ENCODE measurements at regions of chr7 and their contacts with region 1.

Region 1: GRCh38 chr7:141072548-141073172 is 1.2 kb upstream of the TMEM178B start:
- DNase-seq: peak; percentile 65 to 97 (median 84)

Region 2: DNA sequence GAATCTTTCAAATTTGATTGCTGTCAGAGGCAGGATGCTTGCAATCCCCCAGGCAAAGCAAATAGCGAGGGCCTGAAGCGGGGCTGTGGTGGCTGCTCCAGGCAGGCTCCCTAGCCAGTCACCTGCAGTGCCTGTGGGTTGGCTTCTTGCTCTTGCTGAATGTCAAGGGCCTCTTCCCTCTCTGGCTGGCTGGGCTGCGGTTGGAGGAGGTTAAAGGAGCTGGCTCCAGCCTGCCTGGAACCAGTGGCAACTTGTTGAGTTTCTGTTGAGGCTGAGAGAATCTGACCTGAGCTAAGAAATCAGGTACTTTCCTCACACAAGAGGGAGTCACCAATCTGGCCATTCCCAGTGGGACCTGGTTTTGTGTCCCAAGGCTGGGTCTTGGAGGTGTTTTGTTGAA is 135.9 kb after region 1 on chr7:
- intact Hi-C with region 1: loop called (anchors 10 kb)
- DNase-seq: no peak

Region 3: GRCh38 chr7:141262101-141263090 is 189.7 kb after region 1 on chr7:
- intact Hi-C with region 1: loop called (anchors 5 kb)
- DNase-seq: no peak

Region 4: GRCh38 chr7:141533149-141533949 is 460.7 kb after region 1 on chr7:
- intact Hi-C with region 1: loop called (anchors 2 kb)
- DNase-seq: peak; percentile 49 to 94 (median 72)

Region 5: DNA sequence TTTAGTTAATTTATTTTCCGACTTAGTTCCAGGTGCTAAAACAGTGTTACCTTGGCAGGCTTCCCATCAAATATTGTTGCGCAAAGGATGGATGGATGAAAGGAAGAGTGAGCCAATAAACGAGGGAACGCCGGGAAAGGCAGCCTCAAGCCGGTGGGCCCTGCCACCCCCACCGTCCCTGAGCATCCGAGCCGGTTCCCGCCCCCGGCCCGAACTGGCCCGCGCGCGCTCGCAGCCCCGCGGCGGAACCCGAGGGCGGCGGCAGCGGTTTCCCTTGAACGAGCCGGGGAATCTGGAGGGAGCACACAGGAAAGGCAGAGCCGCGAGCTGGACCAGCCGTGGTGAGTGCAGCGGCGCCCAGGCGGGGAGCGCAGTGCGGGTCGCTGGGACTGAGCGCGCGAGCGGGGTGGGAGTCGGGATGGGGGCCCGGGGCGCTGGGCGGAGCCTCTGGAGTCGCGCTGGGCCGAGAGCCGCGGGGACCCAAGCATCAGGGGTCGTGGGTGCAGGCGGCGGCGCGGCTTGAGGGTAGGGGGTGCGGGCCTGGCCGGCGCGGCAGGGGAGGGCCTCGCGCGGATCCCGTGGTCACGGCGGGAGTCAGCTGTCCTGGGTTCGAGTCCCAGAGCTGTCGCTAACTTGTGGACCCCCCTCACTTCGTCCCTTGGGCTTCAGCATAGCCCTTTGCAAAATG is 478.6 kb after region 1 on chr7 and contains the start of gene AGK:
- intact Hi-C with region 1: loop called (anchors 5 kb)
- DNase-seq: peak; percentile 59 to 96 (median 74)